Common myeloid progenitor, CD34-positive (primary cell): ENCODE measurements at regions of chr7 and their contacts with region 1.

Region 1: DNA sequence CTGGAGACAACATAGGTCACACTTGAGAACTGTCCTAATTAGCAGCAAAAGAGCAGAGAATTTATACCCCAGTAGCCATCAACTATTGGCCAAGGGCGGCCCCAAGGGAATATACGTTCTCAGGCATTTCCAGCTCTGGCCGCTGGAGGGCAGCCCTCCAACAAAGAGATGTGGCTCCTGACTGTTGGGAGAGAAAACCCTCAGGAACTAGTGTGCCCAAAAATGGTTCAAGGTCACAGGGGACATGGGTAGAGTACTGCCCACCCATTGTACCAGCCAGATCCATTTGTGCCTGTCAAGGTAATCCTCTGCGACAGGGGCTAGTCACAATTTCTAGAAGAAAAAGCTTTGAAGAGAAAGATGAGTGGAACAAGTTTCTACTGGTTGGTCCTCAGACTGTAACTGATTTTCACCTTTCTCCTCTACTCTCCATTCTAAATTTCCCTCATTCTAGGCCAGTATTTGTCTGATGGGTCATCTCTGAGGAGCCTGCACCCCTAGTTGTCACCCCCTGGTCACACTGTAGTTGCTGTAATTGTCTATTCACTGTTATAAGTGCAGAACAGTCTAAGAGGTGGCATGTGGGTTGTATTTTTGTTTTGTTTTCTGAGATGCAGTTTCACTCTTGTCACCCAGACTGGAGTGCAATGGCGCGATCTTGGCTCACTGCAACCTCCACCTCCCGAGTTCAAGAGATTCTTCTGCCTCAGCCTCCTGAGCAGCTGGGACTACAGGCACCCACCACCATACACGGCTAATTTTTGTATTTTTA is 14.7 kb upstream of the C7orf33 start:
- DNase-seq: peak; percentile 52 to 72 (median 66)
- H3K4me3 ChIP-seq: no peak overlapping the region
- H3K27ac ChIP-seq: no peak overlapping the region
- H3K4me1 ChIP-seq: no peaks in the 10 kb centered on the region
- H3K27me3 ChIP-seq: no peaks in the 10 kb centered on the region

Region 2: GRCh38 chr7:148563583-148564274 is 12.1 kb before region 1 on chr7:
- CTCF ChIA-PET with region 1: interaction called, 23 read pairs
- POLR2A ChIA-PET with region 1: no interaction called
- DNase-seq: no peak
- H3K4me3 ChIP-seq: no peak overlapping the region
- H3K27ac ChIP-seq: no peak overlapping the region
- H3K4me1 ChIP-seq: peaks cover 0 to 18% (median 10%) of the 10 kb centered on the region in 4 experiments
- H3K27me3 ChIP-seq: no peaks in the 10 kb centered on the region

Region 3: DNA sequence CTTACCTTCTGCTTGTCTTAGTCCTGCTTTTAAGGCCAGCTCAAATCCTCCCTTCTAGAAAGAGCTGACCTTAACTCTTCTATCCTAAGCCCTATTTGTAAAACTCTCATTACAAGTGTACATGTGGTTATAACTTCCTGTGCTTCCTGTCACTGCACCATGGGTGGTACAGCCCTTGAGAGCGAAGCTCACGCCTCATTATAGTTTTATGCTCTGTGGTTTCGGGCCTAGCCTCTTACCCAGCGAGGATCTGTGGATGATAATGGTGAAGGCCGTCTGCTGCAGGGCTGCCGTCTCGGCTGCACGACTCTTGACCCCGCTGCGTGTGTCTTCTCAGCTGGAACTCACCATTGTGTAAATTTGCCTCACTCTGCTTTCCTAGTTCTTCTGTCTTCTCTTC is 197.5 kb after region 1 on chr7:
- CTCF ChIA-PET with region 1: interaction called, 16 read pairs
- POLR2A ChIA-PET with region 1: no interaction called
- DNase-seq: peak; percentile 43 to 79 (median 70)
- H3K4me3 ChIP-seq: no peak overlapping the region
- H3K27ac ChIP-seq: peak overlapping the region in 1 of 2 experiments; percentile 44
- H3K4me1 ChIP-seq: peaks cover 4 to 16% (median 14%) of the 10 kb centered on the region in 4 experiments
- H3K27me3 ChIP-seq: no peaks in the 10 kb centered on the region